Heart right ventricle (tissue), 16 donors: ENCODE measurements at regions of chr3 and their contacts with region 1.

Region 1: GRCh38 chr3:54870423-54870822 is 57.4 kb downstream of the LRTM1 start:
- DNase-seq: peak in 1 of 2 donors; percentile 16
- ATAC-seq: peak in 7 of 8 donors; percentile 69 to 79 (median 75)
- H3K4me3 ChIP-seq: no peak overlapping the region
- H3K27ac ChIP-seq: no peak overlapping the region
- H3K4me1 ChIP-seq: no peaks in the 10 kb centered on the region
- H3K27me3 ChIP-seq: no peaks in the 10 kb centered on the region
- CTCF ChIP-seq: peak in 8 of 9 donors; percentile 27 to 62 (median 50)

Region 2: GRCh38 chr3:55160241-55160983 is 290.0 kb after region 1 on chr3:
- intact Hi-C with region 1: loop called in 1 of 10 experiments (anchors 10 kb)
- DNase-seq: peak; percentile 12 to 52
- ATAC-seq: peak; percentile 69 to 90 (median 76)
- H3K4me3 ChIP-seq: no peak overlapping the region
- H3K27ac ChIP-seq: peak overlapping the region in 3 of 10 donors; percentile 6 to 70 (median 31)
- H3K4me1 ChIP-seq: peaks cover 0 to 15% (median 0%) of the 10 kb centered on the region in 9 donors
- H3K27me3 ChIP-seq: peaks cover 0 to 16% (median 5%) of the 10 kb centered on the region in 7 donors
- CTCF ChIP-seq: no peak

Region 3: GRCh38 chr3:55180936-55181535 is 310.6 kb after region 1 on chr3:
- intact Hi-C with region 1: loop called in 3 of 10 experiments (anchors 5 kb)
- DNase-seq: peak in 1 of 2 donors; percentile 36
- ATAC-seq: no peak
- H3K4me3 ChIP-seq: no peak overlapping the region
- H3K27ac ChIP-seq: no peak overlapping the region
- H3K4me1 ChIP-seq: no peaks in the 10 kb centered on the region
- H3K27me3 ChIP-seq: peaks cover 0 to 18% (median 11%) of the 10 kb centered on the region in 7 donors
- CTCF ChIP-seq: peak; percentile 57 to 83 (median 70)

Region 4: GRCh38 chr3:56251343-56251945 is 1381.0 kb after region 1 on chr3:
- intact Hi-C with region 1: loop called in 1 of 10 experiments (anchors 5 kb)
- DNase-seq: peak in 1 of 2 donors; percentile 32
- ATAC-seq: peak in 1 of 8 donors; percentile 39
- H3K4me3 ChIP-seq: no peak overlapping the region
- H3K27ac ChIP-seq: no peak overlapping the region
- H3K4me1 ChIP-seq: no peaks in the 10 kb centered on the region
- H3K27me3 ChIP-seq: peaks cover 0 to 4% (median 0%) of the 10 kb centered on the region in 7 donors
- CTCF ChIP-seq: peak; percentile 55 to 82 (median 77)